PC-3 (cell line): ENCODE measurements at regions of chr14 and their contacts with region 1.

Region 1: DNA sequence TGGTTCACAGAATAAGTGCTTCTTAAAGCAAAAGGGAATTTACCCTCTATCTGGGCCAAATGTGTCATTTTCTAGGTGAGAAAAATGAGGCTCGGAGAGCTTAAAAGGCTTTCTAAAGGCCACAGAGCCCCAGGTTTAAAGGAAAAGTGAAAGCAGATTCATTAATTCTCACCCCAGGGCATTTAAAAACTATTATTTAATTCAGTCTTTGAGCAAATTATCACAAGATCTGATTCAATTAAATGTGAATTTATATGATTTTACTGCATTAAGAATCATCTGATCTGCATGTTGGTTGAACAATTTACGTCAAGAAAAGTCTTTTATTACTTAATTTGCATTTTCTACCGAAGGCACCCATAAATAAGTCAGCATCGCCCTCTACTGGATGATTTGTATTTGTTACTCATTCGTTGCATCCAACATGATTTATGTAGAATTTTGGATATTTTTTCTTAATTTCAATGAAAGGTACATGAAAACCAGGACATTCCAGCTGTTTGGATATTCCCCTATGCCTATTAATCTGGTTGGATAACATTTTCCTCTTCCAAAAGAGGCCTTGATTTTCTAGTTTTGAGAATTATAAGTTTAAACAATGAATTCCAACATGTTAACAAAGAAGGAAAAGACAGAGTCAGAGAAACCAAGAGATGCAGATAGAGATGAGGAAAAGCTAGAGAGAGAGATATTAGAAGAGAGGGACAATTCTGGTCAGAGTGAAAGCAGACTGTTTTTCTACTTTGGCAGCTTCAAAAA is 19.1 kb upstream of the DHRS7 start:
- DNase-seq: peak; percentile 98
- ATAC-seq: peak; percentile 13; the same call in 1 of the 2 replicates
- H3K4me3 ChIP-seq: peak overlapping the region; percentile 50
- H3K27ac ChIP-seq: no peak overlapping the region
- H3K4me1 ChIP-seq: peaks cover 29% of the 10 kb centered on the region
- H3K27me3 ChIP-seq: no peaks in the 10 kb centered on the region
- CTCF ChIP-seq: peak; percentile 100

Region 2: DNA sequence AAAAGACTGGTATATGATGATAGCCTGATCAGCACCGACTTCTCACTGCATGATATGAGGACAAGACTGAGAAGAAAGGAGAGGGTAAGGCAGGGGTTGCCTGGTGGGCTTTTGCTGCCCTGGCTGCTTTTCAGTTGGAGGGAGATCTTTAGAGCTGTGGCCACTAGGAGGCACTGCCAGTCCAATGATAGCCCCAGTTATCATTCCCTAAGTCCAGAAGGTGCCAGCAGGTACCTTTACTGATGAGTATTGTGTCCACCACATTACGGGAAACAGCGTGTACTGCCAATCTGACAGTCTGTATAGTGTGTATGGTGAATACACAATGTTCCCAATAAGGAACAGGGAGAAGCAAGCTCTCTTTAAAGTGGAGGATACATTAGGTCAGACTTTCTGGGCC is 551.9 kb before region 1 on chr14:
- CTCF ChIA-PET with region 1: interaction called, 4 read pairs
- POLR2A ChIA-PET with region 1: no interaction called
- intact Hi-C with region 1: loop called (anchors 1 kb)
- DNase-seq: peak; percentile 87
- ATAC-seq: peak; percentile 73
- H3K4me3 ChIP-seq: no peak overlapping the region
- H3K27ac ChIP-seq: no peak overlapping the region
- H3K4me1 ChIP-seq: no peaks in the 10 kb centered on the region
- H3K27me3 ChIP-seq: peaks cover 75% of the 10 kb centered on the region
- CTCF ChIP-seq: peak; percentile 100

Region 3: GRCh38 chr14:59964251-59965007 is 219.9 kb before region 1 on chr14:
- CTCF ChIA-PET with region 1: interaction called, 39 read pairs
- POLR2A ChIA-PET with region 1: interaction called, 6 read pairs
- intact Hi-C with region 1: loop called (anchors 1 kb)
- DNase-seq: peak; percentile 70
- ATAC-seq: peak; percentile 66
- H3K4me3 ChIP-seq: no peak overlapping the region
- H3K27ac ChIP-seq: no peak overlapping the region
- H3K4me1 ChIP-seq: peaks cover 18% of the 10 kb centered on the region
- H3K27me3 ChIP-seq: peaks cover 23% of the 10 kb centered on the region
- CTCF ChIP-seq: no peak

Region 4: GRCh38 chr14:60151715-60152114 is 32.6 kb before region 1 on chr14:
- CTCF ChIA-PET with region 1: interaction called, 7 read pairs
- POLR2A ChIA-PET with region 1: no interaction called
- intact Hi-C with region 1: loop called (anchors 1 kb)
- DNase-seq: peak; percentile 100
- ATAC-seq: peak; percentile 100
- H3K4me3 ChIP-seq: no peak overlapping the region
- H3K27ac ChIP-seq: peak overlapping the region; percentile 55
- H3K4me1 ChIP-seq: peaks cover 24% of the 10 kb centered on the region
- H3K27me3 ChIP-seq: no peaks in the 10 kb centered on the region
- CTCF ChIP-seq: no peak

Region 5: DNA sequence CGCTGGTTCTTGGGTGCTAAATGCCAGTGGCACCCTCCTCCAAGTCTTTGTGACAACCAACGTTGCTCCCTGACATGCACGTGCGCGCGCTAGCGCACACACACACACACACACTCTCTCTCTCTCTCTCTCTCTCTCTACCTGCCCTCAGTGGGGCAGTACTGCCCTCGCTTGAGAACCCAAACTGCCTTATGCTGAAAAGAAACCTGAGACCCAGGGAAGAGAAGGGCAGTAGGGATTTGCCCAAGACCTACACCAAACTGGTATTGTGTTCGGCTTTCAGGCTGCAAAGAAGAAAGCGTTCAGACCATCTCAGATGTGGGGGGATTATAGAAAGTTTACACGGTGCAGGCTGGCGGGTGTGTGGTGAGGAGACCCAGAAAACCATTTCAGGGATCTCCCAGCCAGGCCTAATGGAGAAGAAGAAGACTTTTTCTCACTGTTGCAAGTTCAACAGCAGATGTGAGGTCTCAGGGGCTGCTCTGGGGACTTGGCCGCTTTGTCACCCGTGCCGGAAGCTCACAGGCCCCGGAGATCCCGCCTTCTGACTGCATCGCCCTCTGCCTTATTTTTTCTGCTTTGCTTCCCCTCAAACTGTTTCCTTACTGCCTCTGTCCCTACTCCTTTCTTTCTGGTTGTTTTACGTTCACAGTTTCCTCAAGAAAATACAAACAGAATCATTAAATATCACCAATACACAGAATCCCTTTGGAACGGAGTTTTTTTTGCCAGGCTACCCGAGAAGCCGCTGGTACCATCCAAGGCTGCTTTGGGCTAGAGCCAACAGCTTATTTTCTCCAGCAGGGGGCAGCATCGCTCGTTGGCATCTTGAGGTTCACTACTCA is 147.1 kb after region 1 on chr14:
- CTCF ChIA-PET with region 1: no interaction called
- POLR2A ChIA-PET with region 1: no interaction called
- intact Hi-C with region 1: loop called (anchors 5 kb)
- DNase-seq: peak; percentile 96
- ATAC-seq: peak; percentile 54
- H3K4me3 ChIP-seq: peak overlapping the region; percentile 48
- H3K27ac ChIP-seq: no peak overlapping the region
- H3K4me1 ChIP-seq: no peaks in the 10 kb centered on the region
- H3K27me3 ChIP-seq: peaks cover 14% of the 10 kb centered on the region; the same call in 1 of the 2 replicates
- CTCF ChIP-seq: peak; percentile 100

Region 6: DNA sequence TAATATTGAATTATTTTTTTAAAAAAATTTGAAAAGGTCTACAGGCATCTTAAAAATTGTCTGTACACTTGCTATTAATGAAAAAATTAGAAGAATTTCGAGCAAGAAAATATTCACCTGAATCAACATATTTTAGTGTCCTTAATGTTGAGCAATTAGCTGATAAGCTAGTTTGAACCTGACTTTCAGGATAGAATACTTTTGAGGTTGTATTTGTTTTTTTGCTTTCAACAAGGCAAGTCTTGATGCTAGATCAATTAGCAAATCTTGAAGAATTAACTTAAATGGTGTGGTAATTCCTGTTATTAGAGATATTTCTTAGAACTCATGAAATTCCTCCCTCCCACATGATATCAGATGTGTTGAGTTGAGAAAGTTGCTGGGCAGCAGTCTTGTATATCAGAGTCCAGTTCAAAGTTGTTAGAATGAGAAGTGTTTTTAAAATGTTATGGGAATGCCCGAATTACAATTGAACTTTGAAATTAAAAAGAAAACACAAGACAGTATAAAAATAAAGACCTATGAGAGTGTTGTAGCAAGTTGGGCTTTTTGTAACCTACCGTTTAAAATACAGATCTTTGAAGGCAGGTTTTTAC is 677.3 kb after region 1 on chr14:
- CTCF ChIA-PET with region 1: no interaction called
- POLR2A ChIA-PET with region 1: no interaction called
- intact Hi-C with region 1: no loop called
- DNase-seq: no peak
- ATAC-seq: no peak; the same call in 1 of the 2 replicates
- H3K4me3 ChIP-seq: no peak overlapping the region
- H3K27ac ChIP-seq: no peak overlapping the region
- H3K4me1 ChIP-seq: peaks cover 15% of the 10 kb centered on the region
- H3K27me3 ChIP-seq: no peaks in the 10 kb centered on the region
- CTCF ChIP-seq: no peak